ENCODE measurements at regions of chr14 and their contacts with region 1.

Region 1: GRCh38 chr14:47040550-47040949 is 389.0 kb upstream of the RPL10L start:
- DNase-seq: peak; percentile 51
- H3K4me3 ChIP-seq: no peak overlapping the region
- H3K27ac ChIP-seq: no peak overlapping the region
- H3K4me1 ChIP-seq: no peaks in the 10 kb centered on the region
- H3K27me3 ChIP-seq: no peaks in the 10 kb centered on the region
- CTCF ChIP-seq: peak; percentile 5 to 13
- POLR2A ChIP-seq: no peak

Region 2: GRCh38 chr14:46490238-46490685 is 550.3 kb before region 1 on chr14:
- CTCF ChIA-PET with region 1: interaction called, 3 read pairs
- POLR2A ChIA-PET with region 1: no interaction called
- dilution Hi-C with region 1: no loop called
- intact Hi-C with region 1: loop called (anchors 1 kb)
- DNase-seq: peak; percentile 55
- H3K4me3 ChIP-seq: no peak overlapping the region
- H3K27ac ChIP-seq: no peak overlapping the region
- H3K4me1 ChIP-seq: no peaks in the 10 kb centered on the region
- H3K27me3 ChIP-seq: no peaks in the 10 kb centered on the region
- CTCF ChIP-seq: peak; percentile 29 to 49
- POLR2A ChIP-seq: no peak

Region 3: DNA sequence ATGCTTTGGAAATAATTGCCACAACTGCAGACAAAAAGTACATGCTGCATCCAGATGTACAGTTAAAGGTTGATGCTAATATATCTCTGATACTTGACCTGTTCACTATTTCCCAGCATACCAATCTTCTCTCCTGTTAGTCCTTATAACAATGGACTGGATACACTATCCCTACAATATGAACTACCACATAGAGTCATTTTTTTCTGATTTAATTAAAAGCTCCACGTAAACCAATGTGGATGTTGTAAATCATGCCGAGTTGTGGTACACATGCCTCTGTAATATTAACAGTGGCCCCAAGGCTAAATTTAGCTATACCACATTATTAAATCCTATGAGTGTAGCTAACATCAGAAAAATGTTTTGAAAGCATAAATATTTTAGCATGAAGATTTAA is 80.1 kb after region 1 on chr14:
- CTCF ChIA-PET with region 1: no interaction called
- POLR2A ChIA-PET with region 1: no interaction called
- dilution Hi-C with region 1: no loop called
- intact Hi-C with region 1: no loop called
- DNase-seq: no peak
- H3K4me3 ChIP-seq: no peak overlapping the region
- H3K27ac ChIP-seq: no peak overlapping the region
- H3K4me1 ChIP-seq: no peaks in the 10 kb centered on the region
- H3K27me3 ChIP-seq: no peaks in the 10 kb centered on the region
- CTCF ChIP-seq: no peak
- POLR2A ChIP-seq: no peak